ENCODE measurements at regions of chr19 and their contacts with region 1.

Region 1: GRCh38 chr19:1373534-1374249 is 10.0 kb upstream of the NDUFS7 start:
- DNase-seq: peak; percentile 90
- ATAC-seq: peak; percentile 80
- H3K4me3 ChIP-seq: peak overlapping the region; percentile 30 to 65 (median 32); a peak in 5 of 6 replicates
- H3K27ac ChIP-seq: peak overlapping the region; percentile 91
- H3K4me1 ChIP-seq: peaks cover 47% of the 10 kb centered on the region
- H3K27me3 ChIP-seq: no peaks in the 10 kb centered on the region
- CTCF ChIP-seq: peak; percentile 25; the same call in 1 of the 2 replicates
- EP300 ChIP-seq: peak in 1 of 2 experiments; percentile 40; a peak in 2 of 4 replicates
- POLR2A ChIP-seq: peak in 1 of 2 experiments; percentile 17; a peak in 1 of 4 replicates
- RAD21 ChIP-seq: peak; percentile 39; the same call in 1 of the 2 replicates

Region 2: DNA sequence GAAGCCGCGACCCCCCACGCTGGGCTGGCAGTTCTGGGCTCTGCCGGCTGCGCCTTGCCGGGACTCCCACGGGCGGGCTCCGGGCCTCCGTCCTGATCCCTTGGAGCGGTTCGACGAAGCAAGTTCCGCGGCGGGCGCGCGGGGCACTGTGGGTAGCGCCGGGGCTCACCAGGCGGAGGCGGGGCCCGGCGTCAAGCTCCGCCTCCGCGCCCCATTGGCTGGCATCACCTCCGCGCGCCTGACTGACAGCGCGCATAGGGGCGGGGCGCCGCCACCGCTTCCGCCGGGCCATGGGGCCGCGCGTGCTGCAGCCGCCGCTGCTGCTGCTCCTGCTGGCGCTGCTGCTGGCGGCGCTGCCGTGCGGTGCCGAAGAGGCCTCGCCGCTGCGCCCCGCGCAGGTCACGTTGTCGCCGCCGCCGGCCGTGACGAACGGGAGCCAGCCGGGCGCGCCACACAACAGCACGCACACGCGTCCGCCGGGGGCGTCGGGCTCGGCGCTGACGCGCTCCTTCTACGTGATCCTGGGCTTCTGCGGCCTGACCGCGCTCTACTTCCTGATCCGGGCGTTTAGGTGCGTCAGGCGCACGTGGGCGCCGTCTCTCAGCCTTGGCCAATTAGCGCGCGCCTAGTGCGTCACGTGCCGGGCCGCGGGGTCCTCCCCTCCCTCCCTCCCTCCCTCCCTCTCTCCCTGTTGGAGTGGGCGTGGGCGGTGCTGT is 98.3 kb before region 1 on chr19 and contains the start of gene FAM174C:
- CTCF ChIA-PET with region 1: interaction called, 16 read pairs
- POLR2A ChIA-PET with region 1: interaction called, 12 read pairs
- in situ Hi-C with region 1: loop called (anchors 5 kb)
- intact Hi-C with region 1: loop called (anchors 1 kb)
- DNase-seq: peak; percentile 91
- ATAC-seq: peak; percentile 69
- H3K4me3 ChIP-seq: peak within 1 kb of the TSS; percentile 57 to 85 (median 73)
- H3K27ac ChIP-seq: peak within 1 kb of the TSS; percentile 100
- H3K4me1 ChIP-seq: peaks cover 58% of the 10 kb centered on the region
- H3K27me3 ChIP-seq: no peaks in the 10 kb centered on the region
- CTCF ChIP-seq: no peak; the same call in 1 of the 2 replicates
- EP300 ChIP-seq: 0 out of 4 replicates have a peak, but pooled peaks of 1 of the 2 experiments have one; percentile 16
- POLR2A ChIP-seq: peak in 1 of 2 experiments; percentile 89; a peak in 2 of 4 replicates
- RAD21 ChIP-seq: peak; percentile 77; the same call in 1 of the 2 replicates
- total RNA-seq, gene FAM174C: 21.9 and 31.3 TPM in 2 replicates

Region 3: DNA sequence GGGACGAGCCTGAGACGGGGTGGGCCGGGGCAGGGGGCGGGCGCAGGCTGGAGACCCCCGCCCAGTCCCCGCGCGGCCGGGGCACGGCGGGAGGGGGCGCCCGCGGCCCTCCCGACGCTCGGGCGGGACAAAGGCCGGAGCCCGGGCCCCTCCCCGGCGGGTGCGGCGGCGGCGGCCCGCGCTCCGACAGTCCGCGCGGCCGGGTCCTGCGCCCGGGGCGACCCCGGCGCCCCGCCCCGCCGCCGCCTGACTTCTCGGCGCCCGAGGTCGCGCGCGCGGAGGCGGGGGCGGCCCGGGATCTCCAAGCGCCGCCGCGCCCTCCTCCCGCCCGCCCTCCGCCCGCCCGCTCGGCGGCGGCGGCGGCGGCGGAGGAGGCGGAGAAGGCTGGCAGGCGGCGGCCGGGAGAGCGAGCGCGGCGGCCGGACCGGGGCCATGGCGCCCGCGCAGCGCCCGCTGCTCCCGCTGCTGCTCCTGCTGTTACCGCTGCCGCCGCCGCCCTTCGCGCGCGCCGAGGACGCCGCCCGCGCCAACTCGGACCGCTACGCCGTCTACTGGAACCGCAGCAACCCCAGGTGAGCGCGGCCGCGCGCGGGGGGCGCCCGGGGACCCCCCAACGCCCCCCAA is 87.8 kb before region 1 on chr19 and contains the start of gene EFNA2:
- CTCF ChIA-PET with region 1: interaction called, 16 read pairs
- POLR2A ChIA-PET with region 1: interaction called, 21 read pairs
- in situ Hi-C with region 1: loop called (anchors 5 kb)
- intact Hi-C with region 1: no loop called
- DNase-seq: no peak
- ATAC-seq: no peak
- H3K4me3 ChIP-seq: peak within 1 kb of the TSS; percentile 75 to 89 (median 82)
- H3K27ac ChIP-seq: peak within 1 kb of the TSS; percentile 75
- H3K4me1 ChIP-seq: peaks cover 67% of the 10 kb centered on the region
- H3K27me3 ChIP-seq: no peaks in the 10 kb centered on the region; a peak in 1 of 5 replicates
- CTCF ChIP-seq: no peak
- EP300 ChIP-seq: no peak
- POLR2A ChIP-seq: no peak
- RAD21 ChIP-seq: no peak
- total RNA-seq, gene EFNA2: 4.3 and 9.9 TPM in 2 replicates

Region 4: GRCh38 chr19:1291761-1292418 is 81.8 kb before region 1 on chr19:
- CTCF ChIA-PET with region 1: no interaction called
- POLR2A ChIA-PET with region 1: interaction called, 10 read pairs
- in situ Hi-C with region 1: no loop called
- intact Hi-C with region 1: no loop called
- DNase-seq: no peak
- ATAC-seq: peak; percentile 53
- H3K4me3 ChIP-seq: peak overlapping the region; percentile 25 to 75 (median 63); a peak in 3 of 6 replicates
- H3K27ac ChIP-seq: peak overlapping the region; percentile 91
- H3K4me1 ChIP-seq: peaks cover 61% of the 10 kb centered on the region
- H3K27me3 ChIP-seq: no peaks in the 10 kb centered on the region
- CTCF ChIP-seq: no peak
- EP300 ChIP-seq: peak in 1 of 2 experiments; percentile 14; a peak in 1 of 4 replicates
- POLR2A ChIP-seq: no peak
- RAD21 ChIP-seq: 0 out of 2 replicates have a peak, but pooled peaks have one; percentile 18

Region 5: GRCh38 chr19:1304197-1304924 is 69.3 kb before region 1 on chr19:
- CTCF ChIA-PET with region 1: no interaction called
- POLR2A ChIA-PET with region 1: interaction called, 13 read pairs
- in situ Hi-C with region 1: no loop called
- intact Hi-C with region 1: no loop called
- DNase-seq: peak; percentile 81
- ATAC-seq: peak; percentile 96
- H3K4me3 ChIP-seq: peak overlapping the region; percentile 24 to 74 (median 42); a peak in 5 of 6 replicates
- H3K27ac ChIP-seq: peak overlapping the region; percentile 39
- H3K4me1 ChIP-seq: peaks cover 38% of the 10 kb centered on the region
- H3K27me3 ChIP-seq: no peaks in the 10 kb centered on the region
- CTCF ChIP-seq: 0 out of 2 replicates have a peak, but pooled peaks have one; percentile 9
- EP300 ChIP-seq: peak in 1 of 2 experiments; percentile 26; a peak in 1 of 4 replicates
- POLR2A ChIP-seq: peak; percentile 49 to 65; a peak in 3 of 4 replicates
- RAD21 ChIP-seq: no peak

Region 6: DNA sequence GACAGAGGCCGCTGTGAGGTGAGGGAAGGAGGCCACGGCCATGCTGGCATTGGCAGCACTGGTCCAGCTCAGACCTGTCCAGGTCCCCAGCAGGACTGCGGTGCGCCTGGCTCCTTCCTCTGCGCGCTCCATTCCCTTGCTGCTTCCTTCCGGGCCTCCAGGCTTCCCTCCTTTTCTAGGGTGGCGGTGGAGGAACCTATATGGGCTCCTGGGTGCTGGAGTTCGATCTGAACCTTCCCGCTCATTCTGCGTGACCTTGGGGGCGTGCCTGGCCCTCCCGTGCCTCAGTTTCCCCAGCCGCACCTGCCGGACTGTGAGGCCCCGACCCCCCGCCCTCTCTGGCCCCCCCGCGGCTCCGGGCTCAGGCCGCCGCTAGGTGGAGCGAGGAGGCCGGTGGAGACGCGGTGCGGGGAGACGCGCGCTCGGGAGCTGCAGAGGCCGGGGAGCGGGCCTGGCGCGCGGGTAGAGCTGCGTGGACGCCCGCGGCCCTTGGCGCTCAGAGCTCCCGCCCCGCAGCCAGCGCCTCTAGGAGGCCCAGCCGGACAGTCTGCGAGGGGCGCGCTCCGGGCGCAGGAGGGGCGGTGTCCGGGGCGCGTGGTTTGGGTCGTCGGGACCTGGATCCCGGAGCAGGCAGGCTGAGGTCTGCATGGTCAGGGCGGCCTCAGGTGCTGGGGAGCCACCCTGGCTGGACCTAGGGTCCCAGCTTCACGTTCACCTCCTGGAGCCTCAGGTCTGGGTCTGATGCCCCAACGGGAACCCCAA is 58.0 kb before region 1 on chr19:
- CTCF ChIA-PET with region 1: no interaction called
- POLR2A ChIA-PET with region 1: interaction called, 8 read pairs
- in situ Hi-C with region 1: no loop called
- intact Hi-C with region 1: loop called (anchors 5 kb)
- DNase-seq: no peak
- ATAC-seq: peak; percentile 64
- H3K4me3 ChIP-seq: peak overlapping the region in 2 of 3 experiments; percentile 43 to 67; a peak in 3 of 6 replicates
- H3K27ac ChIP-seq: no peak overlapping the region
- H3K4me1 ChIP-seq: peaks cover 60% of the 10 kb centered on the region
- H3K27me3 ChIP-seq: peaks cover 8 to 55% of the 10 kb centered on the region in 2 experiments
- CTCF ChIP-seq: peak; percentile 88
- EP300 ChIP-seq: no peak
- POLR2A ChIP-seq: no peak
- RAD21 ChIP-seq: peak; percentile 89

Region 7: DNA sequence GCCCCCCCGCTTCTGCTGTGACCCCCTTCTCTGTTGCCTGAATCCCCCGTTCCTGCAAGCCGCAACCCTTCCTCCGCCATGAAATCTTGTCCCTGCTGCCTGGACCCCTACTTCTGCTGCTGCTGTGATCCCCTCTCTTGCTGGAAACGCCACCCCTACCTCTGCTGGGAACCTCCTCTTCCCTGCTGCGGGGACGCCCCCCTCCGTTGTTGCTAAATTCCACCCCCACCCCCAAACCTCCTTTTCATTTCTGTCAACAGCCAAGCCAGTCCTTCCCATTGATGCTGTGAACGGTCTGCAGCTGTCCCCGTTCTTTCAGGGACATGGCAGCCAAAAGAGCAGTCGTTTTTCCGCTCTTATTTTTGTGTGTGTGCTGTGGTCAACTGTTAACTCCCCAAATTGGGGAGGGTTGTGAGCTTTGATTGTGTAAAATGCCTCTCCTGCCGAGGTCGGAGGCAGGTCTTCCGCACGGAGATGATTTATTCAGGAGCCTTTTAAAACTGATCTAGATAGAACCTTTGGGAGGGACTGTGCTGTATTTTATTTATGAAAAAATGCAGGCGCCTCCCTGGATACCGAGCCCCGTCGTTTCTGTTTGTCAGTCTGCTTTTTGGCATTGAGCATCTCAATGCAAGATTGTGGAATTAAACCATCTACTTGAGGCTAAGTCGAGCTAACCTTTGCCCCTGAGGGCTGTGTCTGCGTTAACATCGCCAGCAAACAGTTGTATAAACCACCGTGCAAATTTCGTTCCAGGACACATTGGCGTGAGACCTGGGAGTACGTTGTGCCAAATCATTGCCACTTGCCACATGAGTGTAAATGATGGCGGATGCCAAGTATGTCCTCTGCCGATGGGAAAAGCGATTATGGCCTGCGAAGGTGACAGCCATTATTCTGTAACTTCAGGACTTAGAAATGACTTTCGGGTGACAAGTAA is 17.9 kb before region 1 on chr19:
- CTCF ChIA-PET with region 1: no interaction called
- POLR2A ChIA-PET with region 1: interaction called, 14 read pairs
- in situ Hi-C with region 1: no loop called
- intact Hi-C with region 1: no loop called
- DNase-seq: no peak
- ATAC-seq: no peak
- H3K4me3 ChIP-seq: peak overlapping the region; percentile 56 to 97 (median 87)
- H3K27ac ChIP-seq: no peak overlapping the region
- H3K4me1 ChIP-seq: peaks cover 22% of the 10 kb centered on the region
- H3K27me3 ChIP-seq: no peaks in the 10 kb centered on the region
- CTCF ChIP-seq: no peak
- EP300 ChIP-seq: no peak
- POLR2A ChIP-seq: no peak
- RAD21 ChIP-seq: no peak